ENCODE measurements at regions of chr4 and their contacts with region 1.

Region 1: DNA sequence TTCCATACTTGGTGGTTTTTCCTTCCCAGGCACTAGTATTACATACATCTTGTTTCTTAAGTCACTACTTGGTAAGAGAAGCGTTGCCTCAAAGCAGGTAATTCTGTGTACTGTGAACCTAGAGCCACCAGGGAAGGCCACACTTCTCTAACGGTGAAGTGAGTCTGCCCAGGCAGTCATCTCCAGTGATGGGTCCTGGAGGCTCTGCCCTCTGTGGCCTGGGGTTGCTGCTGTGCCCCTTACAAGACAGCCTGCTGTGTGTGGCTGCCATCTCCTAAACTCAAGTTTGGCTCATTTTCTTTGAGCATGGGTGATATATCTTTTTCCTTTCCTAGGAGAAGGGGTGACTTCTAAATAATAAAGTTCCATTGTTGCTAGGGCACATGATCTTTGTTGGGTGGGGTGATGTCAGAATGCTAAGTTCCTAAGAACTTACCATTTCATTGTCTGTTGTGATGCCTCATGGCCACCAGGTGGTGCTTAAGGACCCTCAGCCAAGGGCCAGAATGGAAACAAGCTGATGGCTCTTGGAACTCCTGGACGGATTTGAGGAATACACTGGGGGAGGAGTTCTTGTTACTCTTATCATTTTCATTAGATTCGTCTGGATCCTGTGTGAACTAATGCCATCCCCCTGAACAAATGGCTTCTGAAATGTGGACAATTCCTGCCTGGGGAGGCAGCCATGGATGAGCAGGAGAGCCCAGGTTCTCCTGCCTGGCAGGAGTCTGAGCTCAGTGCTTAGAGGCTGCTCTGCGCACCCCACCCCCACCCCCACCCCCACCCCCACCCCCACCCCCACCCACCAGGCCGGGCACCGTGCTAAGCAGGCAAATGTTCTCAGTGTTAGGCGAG is 41.1 kb upstream of the WDR1 start:
- DNase-seq: no peak
- H3K4me3 ChIP-seq: no peak overlapping the region
- CTCF ChIP-seq: peak; percentile 86

Region 2: GRCh38 chr4:10054571-10055041 is 103.1 kb before region 1 on chr4:
- CTCF ChIA-PET with region 1: no interaction called
- POLR2A ChIA-PET with region 1: no interaction called
- DNase-seq: no peak
- H3K4me3 ChIP-seq: no peak overlapping the region
- CTCF ChIP-seq: no peak

Region 3: DNA sequence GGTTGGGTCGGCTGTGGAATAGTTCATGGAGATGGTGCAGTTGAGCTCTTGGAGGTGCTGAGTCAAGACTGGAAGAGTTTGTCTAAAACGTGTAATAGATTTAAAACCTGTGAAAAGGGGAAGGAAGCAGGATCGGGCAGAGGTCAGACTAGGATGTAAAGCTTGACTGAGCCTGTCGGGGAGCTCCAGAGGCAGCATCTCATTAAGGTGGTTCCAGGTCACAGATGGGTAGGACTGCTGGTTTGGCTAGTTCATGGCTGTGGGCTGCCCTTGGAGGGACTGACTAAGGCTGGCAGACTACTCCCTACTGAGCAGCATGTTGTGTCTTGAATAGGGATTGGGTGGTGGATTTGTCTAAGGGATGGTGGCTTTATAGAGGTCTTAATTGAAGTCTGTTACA is 12.7 kb before region 1 on chr4:
- CTCF ChIA-PET with region 1: interaction called, 11 read pairs
- POLR2A ChIA-PET with region 1: no interaction called
- DNase-seq: no peak
- H3K4me3 ChIP-seq: no peak overlapping the region
- CTCF ChIP-seq: no peak

Region 4: GRCh38 chr4:10173037-10173753 is 15.5 kb after region 1 on chr4:
- CTCF ChIA-PET with region 1: interaction called, 21 read pairs
- POLR2A ChIA-PET with region 1: no interaction called
- DNase-seq: no peak
- H3K4me3 ChIP-seq: no peak overlapping the region
- CTCF ChIP-seq: no peak

Region 5: GRCh38 chr4:10403633-10404445 is 246.1 kb after region 1 on chr4:
- CTCF ChIA-PET with region 1: interaction called, 287 read pairs
- POLR2A ChIA-PET with region 1: no interaction called
- DNase-seq: peak; percentile 3
- H3K4me3 ChIP-seq: no peak overlapping the region
- CTCF ChIP-seq: peak; percentile 23

Region 6: GRCh38 chr4:10535912-10536311 is 378.2 kb after region 1 on chr4:
- CTCF ChIA-PET with region 1: interaction called, 43 read pairs
- POLR2A ChIA-PET with region 1: no interaction called
- DNase-seq: no peak
- H3K4me3 ChIP-seq: no peak overlapping the region
- CTCF ChIP-seq: no peak

Region 7: GRCh38 chr4:10554694-10555093 is 397.0 kb after region 1 on chr4:
- CTCF ChIA-PET with region 1: interaction called, 50 read pairs
- POLR2A ChIA-PET with region 1: no interaction called
- DNase-seq: no peak
- H3K4me3 ChIP-seq: no peak overlapping the region
- CTCF ChIP-seq: peak; percentile 80